ENCODE measurements at regions of chrX and their contacts with region 1.

Region 1: GRCh38 chrX:31279359-31279758 is 207.5 kb upstream of the FTHL17 start:
- DNase-seq: peak; percentile 55
- H3K4me3 Mint-ChIP-seq: no peak overlapping the region
- H3K27ac Mint-ChIP-seq: no peak overlapping the region
- H3K4me1 Mint-ChIP-seq: no peaks in the 10 kb centered on the region
- H3K27me3 Mint-ChIP-seq: peaks cover 26% of the 10 kb centered on the region
- CTCF ChIP-seq: peak; percentile 34

Region 2: GRCh38 chrX:30663322-30663721 is 616.0 kb before region 1 on chrX:
- CTCF ChIA-PET with region 1: no interaction called
- POLR2A ChIA-PET with region 1: no interaction called
- intact Hi-C with region 1: no loop called
- DNase-seq: no peak
- H3K4me3 Mint-ChIP-seq: no peak overlapping the region
- H3K27ac Mint-ChIP-seq: no peak overlapping the region
- H3K4me1 Mint-ChIP-seq: no peaks in the 10 kb centered on the region
- H3K27me3 Mint-ChIP-seq: no peaks in the 10 kb centered on the region
- CTCF ChIP-seq: no peak

Region 3: GRCh38 chrX:31423609-31424189 is 144.3 kb after region 1 on chrX:
- CTCF ChIA-PET with region 1: interaction called, 6 read pairs
- POLR2A ChIA-PET with region 1: no interaction called
- intact Hi-C with region 1: loop called (anchors 1 kb)
- DNase-seq: peak; percentile 71
- H3K4me3 Mint-ChIP-seq: no peak overlapping the region
- H3K27ac Mint-ChIP-seq: no peak overlapping the region
- H3K4me1 Mint-ChIP-seq: peaks cover 8% of the 10 kb centered on the region
- H3K27me3 Mint-ChIP-seq: peaks cover 17% of the 10 kb centered on the region
- CTCF ChIP-seq: peak; percentile 31

Measured in MCF 10A (cell line).